CD4-positive, alpha-beta memory T cell (primary cell): ENCODE measurements at regions of chr17 and their contacts with region 1.

Region 1: GRCh38 chr17:51260125-51260880 is at the start of gene UTP18:
- DNase-seq: peak; percentile 96 to 98 (median 97)
- H3K4me3 ChIP-seq: peak within 1 kb of the TSS; percentile 74 to 85
- H3K4me3 Mint-ChIP-seq: peak within 1 kb of the TSS; percentile 91 to 98 (median 96)
- H3K27ac ChIP-seq: peak within 1 kb of the TSS; percentile 97
- H3K27ac Mint-ChIP-seq: peak within 1 kb of the TSS; percentile 96 to 99 (median 99)
- H3K4me1 ChIP-seq: peaks cover 72% of the 10 kb centered on the region
- H3K4me1 Mint-ChIP-seq: peaks cover 42 to 84% (median 58%) of the 10 kb centered on the region in 4 donors
- H3K27me3 ChIP-seq: no peaks in the 10 kb centered on the region
- H3K27me3 Mint-ChIP-seq: no peaks in the 10 kb centered on the region
- total RNA-seq, gene UTP18: 44.0 to 44.1 TPM

Region 2: GRCh38 chr17:51153210-51154072 is 106.9 kb before region 1 on chr17 and contains the start of gene NME1:
- CTCF ChIA-PET with region 1: interaction called, 3 read pairs
- POLR2A ChIA-PET with region 1: interaction called, 12 read pairs
- intact Hi-C with region 1: loop called (anchors 1 kb)
- DNase-seq: peak; percentile 98 to 99 (median 98)
- H3K4me3 ChIP-seq: peak within 1 kb of the TSS; percentile 77 to 85
- H3K4me3 Mint-ChIP-seq: no peak within 1 kb of the TSS
- H3K27ac ChIP-seq: peak within 1 kb of the TSS; percentile 61
- H3K27ac Mint-ChIP-seq: no peak within 1 kb of the TSS
- H3K4me1 ChIP-seq: peaks cover 21% of the 10 kb centered on the region
- H3K4me1 Mint-ChIP-seq: peaks cover 0 to 7% (median 2%) of the 10 kb centered on the region in 4 donors
- H3K27me3 ChIP-seq: no peaks in the 10 kb centered on the region
- H3K27me3 Mint-ChIP-seq: peaks cover 0 to 1% of the 10 kb centered on the region in 2 donors
- total RNA-seq, gene NME1: 10.0 to 12.2 TPM